Naive thymus-derived CD4-positive, alpha-beta T cell (primary cell): ENCODE measurements at regions of chrX and their contacts with region 1.

Region 1: DNA sequence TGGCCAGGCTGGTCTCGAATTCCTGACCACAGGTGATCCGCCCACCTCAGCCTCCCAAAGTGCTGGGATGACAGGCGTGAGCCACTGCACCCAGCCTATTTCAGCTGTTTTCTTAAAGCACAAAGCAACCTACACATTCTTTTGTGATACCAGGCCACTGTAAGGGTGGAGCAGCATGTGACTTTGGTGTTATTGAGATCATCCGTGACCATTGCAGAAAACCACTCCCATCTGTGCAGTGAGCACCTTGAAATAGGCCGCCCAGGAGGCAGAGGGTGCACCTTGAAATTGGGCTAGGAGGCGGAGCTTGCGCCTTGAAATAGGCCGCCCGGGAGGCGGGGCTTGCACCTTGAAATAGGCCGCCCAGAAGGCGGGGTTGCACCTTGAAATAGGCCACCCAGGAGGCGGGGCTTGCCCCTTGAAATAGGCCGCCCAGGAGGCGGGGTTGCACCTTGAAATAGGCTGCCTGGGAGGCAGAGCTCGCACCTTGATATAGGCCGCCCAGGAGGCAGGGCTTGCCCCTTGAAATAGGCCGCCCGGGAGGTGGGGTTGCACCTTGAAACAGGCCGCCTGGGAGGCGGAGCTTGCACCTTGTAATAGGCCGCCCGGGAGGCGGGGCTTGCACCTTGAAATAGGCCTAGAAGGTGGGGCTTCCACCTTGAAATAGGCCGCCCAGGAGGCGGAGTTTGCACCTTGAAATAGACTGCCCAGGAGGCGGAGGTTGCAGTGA is 9.0 kb upstream of the SLC25A6 start:
- DNase-seq: no peak
- ATAC-seq: no peak
- H3K4me3 ChIP-seq: no peak overlapping the region
- H3K4me3 Mint-ChIP-seq: no peak overlapping the region
- H3K27ac ChIP-seq: no peak overlapping the region
- H3K27ac Mint-ChIP-seq: no peak overlapping the region
- H3K4me1 ChIP-seq: no peaks in the 10 kb centered on the region
- H3K4me1 Mint-ChIP-seq: peaks cover 2 to 9% (median 4%) of the 10 kb centered on the region in 7 donors
- H3K27me3 ChIP-seq: no peaks in the 10 kb centered on the region
- H3K27me3 Mint-ChIP-seq: no peaks in the 10 kb centered on the region

Region 2: DNA sequence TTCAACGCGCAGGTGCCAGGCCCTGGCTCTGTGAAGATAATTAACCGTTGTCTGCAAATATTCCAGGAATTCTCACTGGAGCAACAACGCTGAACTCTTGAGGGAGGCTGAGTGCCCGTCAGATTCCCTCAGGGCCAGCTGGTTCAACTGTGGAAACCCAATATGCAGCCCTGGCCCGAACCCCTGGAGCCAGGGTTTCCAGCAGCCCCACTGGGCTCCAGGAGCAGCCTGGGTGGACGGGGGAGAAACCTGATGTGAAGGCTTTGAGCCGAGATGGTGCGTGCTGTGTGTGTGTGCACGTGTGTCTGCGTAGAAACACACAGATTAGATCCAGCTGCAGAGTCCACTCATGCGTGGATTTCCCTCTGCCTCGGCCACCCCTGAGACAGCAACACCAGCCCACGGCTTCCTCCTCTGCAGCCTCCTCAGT is 10.4 kb after region 1 on chrX:
- CTCF ChIA-PET with region 1: no interaction called
- POLR2A ChIA-PET with region 1: no interaction called
- intact Hi-C with region 1: loop called in 1 of 2 experiments (anchors 1 kb)
- DNase-seq: no peak
- ATAC-seq: no peak
- H3K4me3 ChIP-seq: no peak overlapping the region
- H3K4me3 Mint-ChIP-seq: no peak overlapping the region
- H3K27ac ChIP-seq: no peak overlapping the region
- H3K27ac Mint-ChIP-seq: no peak overlapping the region
- H3K4me1 ChIP-seq: no peaks in the 10 kb centered on the region
- H3K4me1 Mint-ChIP-seq: no peaks in the 10 kb centered on the region
- H3K27me3 ChIP-seq: no peaks in the 10 kb centered on the region
- H3K27me3 Mint-ChIP-seq: no peaks in the 10 kb centered on the region

Region 3: DNA sequence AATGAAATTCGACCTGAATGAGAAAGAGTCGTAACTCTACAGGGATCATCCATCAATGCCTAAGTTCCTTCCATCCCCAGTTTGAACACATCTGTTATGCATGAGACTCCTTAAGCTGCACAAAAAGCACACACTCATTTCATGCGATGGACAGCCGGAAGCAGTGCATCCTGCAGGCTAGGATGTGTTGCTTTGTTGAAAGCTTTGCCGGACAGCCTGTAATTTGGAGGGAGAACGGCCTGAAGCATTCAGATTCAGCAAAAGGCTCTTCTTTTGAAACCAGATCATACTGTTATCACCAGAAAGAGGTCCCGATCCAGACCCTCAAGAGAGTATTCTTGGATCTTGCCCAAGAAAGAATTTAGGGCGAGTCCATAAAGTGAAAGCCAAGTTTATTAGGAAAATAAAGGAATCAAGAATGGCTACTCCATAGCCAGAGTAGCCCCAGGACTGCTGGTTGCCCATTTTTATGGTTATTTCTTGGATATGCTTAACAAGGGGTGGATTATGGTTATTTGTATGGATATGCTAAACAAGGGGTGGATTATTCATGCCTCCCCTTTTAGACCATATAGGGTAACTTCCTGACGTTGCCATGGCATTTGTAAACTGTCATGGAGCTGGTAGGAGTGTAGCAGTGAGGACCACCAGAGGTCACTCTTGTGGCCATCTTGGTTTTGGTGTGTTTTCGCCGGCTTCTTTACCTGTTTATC is 1148.0 kb after region 1 on chrX:
- CTCF ChIA-PET with region 1: no interaction called
- POLR2A ChIA-PET with region 1: no interaction called
- intact Hi-C with region 1: no loop called
- DNase-seq: no peak
- ATAC-seq: no peak
- H3K4me3 ChIP-seq: no peak overlapping the region
- H3K4me3 Mint-ChIP-seq: no peak overlapping the region
- H3K27ac ChIP-seq: no peak overlapping the region
- H3K27ac Mint-ChIP-seq: no peak overlapping the region
- H3K4me1 ChIP-seq: no peaks in the 10 kb centered on the region
- H3K4me1 Mint-ChIP-seq: no peaks in the 10 kb centered on the region
- H3K27me3 ChIP-seq: no peaks in the 10 kb centered on the region
- H3K27me3 Mint-ChIP-seq: peaks cover 0 to 13% (median 4%) of the 10 kb centered on the region in 5 donors